Activated naive CD4-positive, alpha-beta T cell treated with anti-CD3 and anti-CD28 coated beads for 36 hours (primary cell): ENCODE measurements at regions of chr10 and their contacts with region 1.

Region 1: GRCh38 chr10:88493691-88494483 is 89.2 kb downstream of the RNLS start:
- DNase-seq: no peak
- H3K4me3 Mint-ChIP-seq: no peak overlapping the region
- H3K27ac Mint-ChIP-seq: no peak overlapping the region
- H3K4me1 Mint-ChIP-seq: peaks cover 17% of the 10 kb centered on the region
- H3K27me3 Mint-ChIP-seq: no peaks in the 10 kb centered on the region

Region 2: GRCh38 chr10:87804939-87805569 is 688.8 kb before region 1 on chr10:
- CTCF ChIA-PET with region 1: no interaction called
- intact Hi-C with region 1: no loop called
- DNase-seq: no peak
- H3K4me3 Mint-ChIP-seq: no peak overlapping the region
- H3K27ac Mint-ChIP-seq: no peak overlapping the region
- H3K4me1 Mint-ChIP-seq: peaks cover 33% of the 10 kb centered on the region
- H3K27me3 Mint-ChIP-seq: no peaks in the 10 kb centered on the region

Region 3: GRCh38 chr10:88442716-88443115 is 51.2 kb before region 1 on chr10:
- CTCF ChIA-PET with region 1: no interaction called
- intact Hi-C with region 1: loop called (anchors 5 kb)
- DNase-seq: no peak
- H3K4me3 Mint-ChIP-seq: no peak overlapping the region
- H3K27ac Mint-ChIP-seq: no peak overlapping the region
- H3K4me1 Mint-ChIP-seq: no peaks in the 10 kb centered on the region
- H3K27me3 Mint-ChIP-seq: no peaks in the 10 kb centered on the region